ENCODE measurements at regions of chr17 and their contacts with region 1.

Region 1: GRCh38 chr17:82351716-82352488 is 7.1 kb upstream of the TEX19 start:
- DNase-seq: peak; percentile 79 to 96
- H3K4me3 ChIP-seq: no peak overlapping the region
- CTCF ChIP-seq: peak in 1 of 3 donors; percentile 67
- POLR2A ChIP-seq: no peak

Region 2: GRCh38 chr17:82414548-82415281 is 62.8 kb after region 1 on chr17:
- intact Hi-C with region 1: loop called (anchors 5 kb)
- DNase-seq: peak in 1 of 2 donors; percentile 93
- H3K4me3 ChIP-seq: no peak overlapping the region
- CTCF ChIP-seq: no peak
- POLR2A ChIP-seq: no peak

Region 3: DNA sequence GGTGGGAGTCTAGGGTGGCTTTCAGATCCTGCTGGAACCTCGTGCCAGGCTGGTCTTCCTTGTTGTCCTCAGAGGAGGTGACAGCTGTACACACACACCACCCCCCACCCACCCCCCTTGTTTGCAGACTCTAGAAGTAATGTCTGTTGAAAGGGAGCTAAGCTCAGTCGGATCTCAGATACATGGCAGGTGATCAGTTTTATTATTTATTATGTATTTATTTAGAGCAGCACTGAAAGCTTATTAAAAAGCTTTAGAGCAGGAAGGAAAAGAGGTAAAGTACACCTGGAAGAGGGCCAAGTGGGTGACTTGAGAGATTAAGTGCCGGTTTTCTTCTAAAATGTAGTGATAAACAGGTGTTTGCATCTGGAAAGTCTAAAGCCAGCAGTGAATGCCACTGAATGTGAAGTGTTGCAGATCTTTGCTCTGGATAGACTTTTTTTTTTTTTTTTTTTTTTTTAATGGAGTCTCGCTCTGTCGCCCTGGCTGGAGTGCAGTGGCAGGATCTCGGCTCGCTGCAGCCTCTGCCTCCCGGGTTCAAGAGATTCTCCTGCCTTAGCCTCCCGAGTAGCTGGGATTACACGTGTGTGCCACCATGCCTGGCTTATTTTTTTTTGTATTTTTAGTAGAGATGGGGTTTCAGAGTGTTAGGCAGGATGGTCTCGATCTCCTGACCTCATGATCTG is 207.8 kb after region 1 on chr17:
- intact Hi-C with region 1: loop called (anchors 5 kb)
- DNase-seq: no peak
- H3K4me3 ChIP-seq: no peak overlapping the region
- CTCF ChIP-seq: no peak
- POLR2A ChIP-seq: no peak

Region 4: DNA sequence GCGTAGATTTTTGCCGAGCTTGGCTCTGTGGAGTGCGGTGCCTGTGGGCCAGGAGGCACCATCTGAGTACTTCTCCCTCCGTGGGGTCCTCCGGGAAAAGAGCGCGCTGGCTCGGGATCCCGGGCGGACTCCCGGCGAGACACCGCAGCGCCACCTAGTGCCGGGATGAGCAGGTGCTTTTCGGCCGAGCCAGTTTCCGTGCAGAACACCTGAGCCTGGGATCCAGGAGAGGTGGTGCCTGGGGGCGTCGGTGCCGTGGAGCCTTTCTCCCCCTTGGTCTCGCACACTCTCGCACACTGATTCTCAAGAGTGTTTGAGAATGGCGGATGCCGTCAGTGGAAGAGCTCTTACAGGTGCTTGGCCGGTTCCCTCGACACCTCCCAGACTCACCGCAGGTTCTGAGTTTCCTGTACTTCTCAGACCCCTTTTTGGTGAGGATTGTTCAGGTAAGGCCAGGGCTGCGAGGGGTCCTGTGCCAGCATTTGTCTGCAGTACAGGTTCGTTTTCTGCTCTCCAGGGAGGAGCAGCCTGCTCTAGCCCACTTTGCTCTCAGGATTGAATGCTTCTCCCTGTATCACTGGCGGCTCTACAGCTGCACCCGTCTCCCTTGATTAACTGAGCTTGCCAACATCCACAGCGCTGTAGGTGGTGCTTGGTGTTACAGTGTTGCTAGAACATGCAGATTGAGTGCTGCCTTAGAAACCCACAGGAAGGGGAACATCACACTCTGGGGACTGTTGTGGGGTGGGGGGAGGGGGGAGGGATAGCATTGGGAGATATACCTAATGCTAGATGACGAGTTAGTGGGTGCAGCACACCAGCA is 423.3 kb after region 1 on chr17:
- intact Hi-C with region 1: loop called (anchors 10 kb)
- DNase-seq: no peak
- H3K4me3 ChIP-seq: no peak overlapping the region
- CTCF ChIP-seq: peak in 1 of 3 donors; percentile 60
- POLR2A ChIP-seq: no peak